Transverse colon (tissue), 4 donors: ENCODE measurements at regions of chr20 and their contacts with region 1.

Region 1: DNA sequence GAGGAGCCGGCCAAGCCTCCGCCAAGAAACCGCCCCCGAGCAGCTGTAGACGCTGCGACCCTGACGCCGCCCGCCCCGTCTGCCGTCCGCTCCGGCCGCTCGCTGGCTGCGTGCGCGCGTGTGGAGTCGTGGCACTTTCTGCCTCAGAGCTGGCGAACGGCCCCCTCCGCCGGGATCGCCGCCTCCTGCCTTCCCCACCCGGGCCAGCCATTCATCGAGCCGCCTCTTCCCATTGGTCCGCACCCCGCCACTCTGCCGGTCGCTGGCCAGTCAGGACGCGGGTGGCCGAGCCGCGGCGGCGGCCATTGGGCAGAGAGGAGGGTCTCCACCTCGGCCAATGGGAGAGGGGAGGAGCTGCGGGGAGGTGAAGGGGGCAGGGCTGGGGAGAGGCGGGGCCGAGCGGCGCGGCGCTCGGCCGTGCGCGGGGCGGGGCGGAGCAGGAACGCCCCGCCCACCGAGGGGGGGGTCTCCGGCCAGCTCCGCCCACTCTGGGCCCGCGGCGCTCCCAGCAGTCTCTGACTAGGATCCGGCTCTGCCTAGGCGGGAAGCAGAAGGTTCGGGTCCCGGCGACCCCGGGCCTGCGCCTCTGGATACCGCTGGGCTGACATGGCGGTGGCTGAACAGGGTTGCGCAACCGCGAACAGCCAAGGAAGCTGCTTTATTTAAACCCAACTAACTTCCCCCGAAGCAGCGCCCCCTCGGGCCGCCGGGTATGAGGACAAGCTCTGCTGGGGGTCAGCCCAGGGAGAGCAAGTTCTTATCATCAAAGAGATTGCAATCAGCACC is at the start of gene RRBP1:
- DNase-seq: peak; percentile 99
- H3K4me3 ChIP-seq: peak within 1 kb of the TSS; percentile 83 to 92 (median 90)
- H3K27ac ChIP-seq: peak within 1 kb of the TSS; percentile 97 to 99 (median 99)
- H3K4me1 ChIP-seq: peaks cover 11 to 47% (median 39%) of the 10 kb centered on the region in 4 donors
- H3K27me3 ChIP-seq: no peaks in the 10 kb centered on the region
- CTCF ChIP-seq: peak; percentile 59 to 97 (median 80)
- EP300 ChIP-seq: peak; percentile 38
- POLR2A ChIP-seq: peak; percentile 98
- total RNA-seq, gene RRBP1: 219 to 403 (median 288) TPM

Region 2: DNA sequence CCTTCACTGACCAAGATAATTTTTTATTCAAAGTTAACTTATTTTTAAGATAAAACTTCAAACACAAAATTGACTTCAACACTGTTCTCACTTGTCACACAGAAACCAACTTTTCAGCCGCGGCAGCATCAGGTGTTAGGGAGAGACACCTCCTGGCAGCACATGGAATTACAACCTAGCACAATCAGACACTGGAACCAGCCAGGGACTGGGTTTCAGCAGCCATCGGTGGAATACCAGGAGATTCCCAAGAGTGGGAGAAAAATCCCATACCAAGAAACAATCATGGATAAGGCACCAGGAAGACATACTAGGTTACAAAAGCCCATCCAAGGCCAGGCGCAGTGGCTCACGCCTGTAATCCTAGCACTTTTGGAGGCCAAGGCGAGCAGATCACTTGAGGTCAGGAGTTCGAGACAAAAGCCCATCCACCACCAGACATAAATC is 216.3 kb after region 1 on chr20:
- in situ Hi-C with region 1: loop called in 3 of 4 experiments (anchors 10 to 25 kb)
- intact Hi-C with region 1: loop called (anchors 5 kb)
- DNase-seq: peak; percentile 81
- H3K4me3 ChIP-seq: no peak overlapping the region
- H3K27ac ChIP-seq: no peak overlapping the region
- H3K4me1 ChIP-seq: peaks cover 0 to 19% (median 2%) of the 10 kb centered on the region in 4 donors
- H3K27me3 ChIP-seq: no peaks in the 10 kb centered on the region
- CTCF ChIP-seq: peak; percentile 89 to 98 (median 96)
- EP300 ChIP-seq: no peak
- POLR2A ChIP-seq: no peak

Region 3: DNA sequence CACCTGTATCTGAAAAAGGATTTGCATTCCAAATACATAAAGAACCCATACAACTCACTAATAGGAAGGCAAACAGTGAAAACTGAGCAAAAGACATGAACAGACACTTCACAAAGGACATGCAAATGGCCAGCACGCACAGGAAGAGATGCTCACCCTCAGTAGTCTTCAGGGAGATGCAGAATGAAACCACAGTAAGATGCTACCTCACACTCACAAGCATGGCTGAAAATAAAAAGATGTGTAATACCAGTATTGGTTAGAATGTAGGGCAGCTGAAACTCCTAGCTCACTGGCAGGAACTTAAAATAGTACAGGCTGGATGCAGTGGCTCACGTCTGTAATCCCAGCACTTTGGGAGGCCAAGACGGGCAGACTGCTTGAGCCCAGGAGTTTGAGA is 221.7 kb after region 1 on chr20:
- in situ Hi-C with region 1: loop called in 3 of 4 experiments (anchors 10 to 25 kb)
- intact Hi-C with region 1: loop called (anchors 5 kb)
- DNase-seq: no peak
- H3K4me3 ChIP-seq: no peak overlapping the region
- H3K27ac ChIP-seq: no peak overlapping the region
- H3K4me1 ChIP-seq: no peaks in the 10 kb centered on the region
- H3K27me3 ChIP-seq: no peaks in the 10 kb centered on the region
- CTCF ChIP-seq: no peak
- EP300 ChIP-seq: no peak
- POLR2A ChIP-seq: no peak